ENCODE measurements at regions of chr4 and their contacts with region 1.

Region 1: DNA sequence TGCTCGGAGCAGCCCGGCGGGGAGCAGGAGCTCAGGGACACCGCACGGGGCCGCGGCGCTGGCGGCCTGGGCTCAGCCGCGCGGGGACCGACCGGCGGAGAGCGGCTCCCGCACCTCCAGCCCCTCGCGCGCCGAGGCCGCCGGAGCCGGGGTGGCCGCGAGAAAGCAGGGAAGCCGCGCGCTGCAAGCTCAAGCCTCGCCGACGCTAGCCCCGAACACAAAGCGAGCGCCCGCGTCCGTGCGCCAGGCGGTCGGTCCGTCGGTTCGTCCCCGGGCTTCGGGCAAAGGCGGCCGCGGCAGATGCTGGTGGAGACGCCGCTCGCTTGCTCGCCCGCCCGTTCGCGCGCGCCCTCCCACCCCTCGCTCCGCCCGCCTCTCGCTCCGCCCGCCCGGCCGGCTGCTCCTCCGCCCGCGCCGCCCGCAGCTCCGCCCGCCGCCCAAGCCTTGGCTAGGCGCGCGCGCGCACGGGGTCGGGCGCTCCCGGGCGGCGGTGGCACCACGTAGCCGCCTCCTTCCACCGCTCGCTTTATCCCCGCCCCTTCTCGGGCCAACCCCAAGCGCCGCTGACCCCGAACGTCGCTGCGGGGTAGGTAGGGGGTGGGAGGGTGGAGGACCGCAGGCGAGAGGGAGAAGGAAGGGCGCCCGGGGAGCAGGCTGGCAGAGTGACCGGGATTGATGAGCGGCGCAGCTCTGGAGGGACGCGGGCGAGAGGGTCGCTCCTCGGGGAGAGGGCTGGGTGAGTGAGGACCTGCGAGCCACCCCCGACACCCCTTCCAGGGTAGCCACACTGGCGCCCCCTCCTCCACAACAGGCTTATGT is at the start of gene TSPAN5:
- DNase-seq: peak; percentile 67
- ATAC-seq: peak; percentile 86
- H3K4me3 ChIP-seq: peak within 1 kb of the TSS; percentile 64
- H3K27ac ChIP-seq: peak within 1 kb of the TSS; percentile 94
- H3K4me1 ChIP-seq: peaks cover 23% of the 10 kb centered on the region
- H3K27me3 ChIP-seq: no peaks in the 10 kb centered on the region
- CTCF ChIP-seq: no peak; the same call in 1 of the 2 replicates
- POLR2A ChIP-seq: no peak; the same call in 1 of the 2 replicates
- RAD21 ChIP-seq: peak; percentile 13; the same call in 1 of the 2 replicates
- total RNA-seq, gene TSPAN5: 79.6 and 88.3 TPM in 2 replicates

Region 2: GRCh38 chr4:97627750-97628149 is 1030.7 kb before region 1 on chr4:
- CTCF ChIA-PET with region 1: no interaction called
- POLR2A ChIA-PET with region 1: no interaction called
- dilution Hi-C with region 1: no loop called
- in situ Hi-C with region 1: no loop called
- intact Hi-C with region 1: no loop called
- DNase-seq: no peak
- ATAC-seq: no peak
- H3K4me3 ChIP-seq: no peak overlapping the region
- H3K27ac ChIP-seq: no peak overlapping the region
- H3K4me1 ChIP-seq: no peaks in the 10 kb centered on the region
- H3K27me3 ChIP-seq: no peaks in the 10 kb centered on the region
- CTCF ChIP-seq: no peak
- POLR2A ChIP-seq: no peak
- RAD21 ChIP-seq: no peak

Region 3: DNA sequence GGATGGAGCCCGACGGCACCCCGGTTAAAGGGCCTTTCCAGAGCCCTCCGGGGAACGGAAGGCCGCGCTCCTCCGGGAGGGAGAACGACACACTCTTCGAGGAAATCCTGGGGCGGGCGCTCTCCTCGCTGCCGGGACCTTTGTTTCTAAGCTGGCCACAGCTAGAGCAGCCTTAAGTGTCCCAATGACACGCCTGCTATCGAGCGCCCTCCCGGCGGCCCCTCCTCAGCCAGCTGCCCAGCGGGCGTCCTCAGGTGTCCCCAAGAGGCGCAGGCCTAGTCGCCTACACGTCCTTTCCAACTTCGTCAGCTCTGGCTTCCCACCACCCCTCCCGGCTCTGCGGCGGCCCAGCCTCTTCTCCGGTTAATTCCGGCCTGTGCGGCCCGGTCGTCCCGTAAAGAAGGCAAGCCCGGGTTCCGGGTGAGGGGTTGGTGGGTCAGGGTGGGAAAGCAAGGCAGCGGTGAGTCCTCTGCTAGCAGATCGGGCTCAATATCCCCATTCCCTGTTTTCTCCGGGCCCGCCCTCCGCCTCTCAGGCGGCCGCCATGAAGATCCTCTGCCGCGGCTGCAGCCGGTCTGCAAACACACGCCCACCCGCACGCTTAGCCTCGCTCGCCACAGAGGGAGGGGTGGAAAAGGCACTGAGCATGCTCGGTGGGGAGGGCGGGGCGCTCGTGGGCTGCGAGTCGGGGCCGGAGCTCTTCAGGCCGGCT is 397.8 kb before region 1 on chr4:
- CTCF ChIA-PET with region 1: no interaction called
- POLR2A ChIA-PET with region 1: no interaction called
- dilution Hi-C with region 1: no loop called
- in situ Hi-C with region 1: loop called (anchors 25 kb)
- intact Hi-C with region 1: loop called (anchors 2 kb)
- DNase-seq: peak; percentile 96
- ATAC-seq: peak; percentile 95
- H3K4me3 ChIP-seq: peak overlapping the region; percentile 51
- H3K27ac ChIP-seq: peak overlapping the region; percentile 82
- H3K4me1 ChIP-seq: peaks cover 4% of the 10 kb centered on the region
- H3K27me3 ChIP-seq: no peaks in the 10 kb centered on the region
- CTCF ChIP-seq: no peak
- POLR2A ChIP-seq: peak; percentile 91
- RAD21 ChIP-seq: no peak

Region 4: GRCh38 chr4:98518559-98519267 is 139.8 kb before region 1 on chr4:
- CTCF ChIA-PET with region 1: no interaction called
- POLR2A ChIA-PET with region 1: no interaction called
- dilution Hi-C with region 1: no loop called
- in situ Hi-C with region 1: no loop called
- intact Hi-C with region 1: loop called (anchors 5 kb)
- DNase-seq: no peak
- ATAC-seq: no peak
- H3K4me3 ChIP-seq: no peak overlapping the region
- H3K27ac ChIP-seq: peak overlapping the region; percentile 68; the same call in 1 of the 2 replicates
- H3K4me1 ChIP-seq: peaks cover 46% of the 10 kb centered on the region
- H3K27me3 ChIP-seq: no peaks in the 10 kb centered on the region
- CTCF ChIP-seq: no peak
- POLR2A ChIP-seq: no peak
- RAD21 ChIP-seq: no peak

Region 5: GRCh38 chr4:98728433-98728832 is 69.9 kb after region 1 on chr4:
- CTCF ChIA-PET with region 1: no interaction called
- POLR2A ChIA-PET with region 1: no interaction called
- dilution Hi-C with region 1: no loop called
- in situ Hi-C with region 1: no loop called
- intact Hi-C with region 1: no loop called
- DNase-seq: peak; percentile 69
- ATAC-seq: peak; percentile 92
- H3K4me3 ChIP-seq: no peak overlapping the region
- H3K27ac ChIP-seq: no peak overlapping the region
- H3K4me1 ChIP-seq: peaks cover 2% of the 10 kb centered on the region; the same call in 1 of the 2 replicates
- H3K27me3 ChIP-seq: peaks cover 3% of the 10 kb centered on the region
- CTCF ChIP-seq: 0 out of 2 replicates have a peak, but pooled peaks have one; percentile 5
- POLR2A ChIP-seq: no peak
- RAD21 ChIP-seq: no peak

Region 6: GRCh38 chr4:98928505-98929340 is 270.2 kb after region 1 on chr4 and contains the start of gene EIF4E:
- CTCF ChIA-PET with region 1: no interaction called
- POLR2A ChIA-PET with region 1: no interaction called
- dilution Hi-C with region 1: no loop called
- in situ Hi-C with region 1: loop called (anchors 5 kb)
- intact Hi-C with region 1: loop called (anchors 2 kb)
- DNase-seq: peak; percentile 99
- ATAC-seq: peak; percentile 80
- H3K4me3 ChIP-seq: peak within 1 kb of the TSS; percentile 85
- H3K27ac ChIP-seq: peak within 1 kb of the TSS; percentile 94
- H3K4me1 ChIP-seq: peaks cover 3% of the 10 kb centered on the region; the same call in 1 of the 2 replicates
- H3K27me3 ChIP-seq: no peaks in the 10 kb centered on the region
- CTCF ChIP-seq: 0 out of 2 replicates have a peak, but pooled peaks have one; percentile 20
- POLR2A ChIP-seq: 0 out of 2 replicates have a peak, but pooled peaks have one; percentile 60
- RAD21 ChIP-seq: no peak
- total RNA-seq, gene EIF4E: 113 and 288 TPM in 2 replicates

Region 7: DNA sequence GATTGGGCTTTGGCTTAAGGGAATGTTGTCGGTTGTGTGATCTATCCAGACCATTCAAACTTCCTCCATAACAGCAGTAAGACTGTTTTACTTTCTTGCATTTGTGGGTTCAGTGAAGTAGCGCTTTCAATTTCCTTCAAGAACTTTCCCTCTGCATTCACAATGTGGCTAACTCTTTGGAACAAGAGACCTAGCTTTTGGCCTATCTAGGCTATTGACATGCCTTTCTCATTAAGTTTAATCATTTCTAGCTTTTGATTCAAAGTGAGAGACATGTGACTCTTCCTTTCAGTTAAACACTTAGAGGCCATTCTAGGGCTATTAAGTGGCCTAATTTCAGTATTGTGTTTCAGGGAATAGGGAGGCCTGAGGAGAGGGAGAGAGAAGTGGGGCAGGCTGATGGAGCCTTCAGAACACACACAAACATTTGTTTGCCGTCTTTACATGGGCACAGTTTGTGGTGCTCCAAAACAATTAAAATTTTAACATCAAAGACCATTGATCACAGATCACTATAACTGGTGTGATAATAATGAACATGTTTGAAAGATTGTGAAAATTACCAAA is 396.0 kb after region 1 on chr4:
- CTCF ChIA-PET with region 1: no interaction called
- POLR2A ChIA-PET with region 1: no interaction called
- dilution Hi-C with region 1: no loop called
- in situ Hi-C with region 1: loop called (anchors 10 kb)
- intact Hi-C with region 1: loop called (anchors 1 kb)
- DNase-seq: no peak
- ATAC-seq: no peak
- H3K4me3 ChIP-seq: no peak overlapping the region
- H3K27ac ChIP-seq: no peak overlapping the region
- H3K4me1 ChIP-seq: peaks cover 5% of the 10 kb centered on the region
- H3K27me3 ChIP-seq: no peaks in the 10 kb centered on the region
- CTCF ChIP-seq: no peak
- POLR2A ChIP-seq: no peak
- RAD21 ChIP-seq: no peak

Region 8: DNA sequence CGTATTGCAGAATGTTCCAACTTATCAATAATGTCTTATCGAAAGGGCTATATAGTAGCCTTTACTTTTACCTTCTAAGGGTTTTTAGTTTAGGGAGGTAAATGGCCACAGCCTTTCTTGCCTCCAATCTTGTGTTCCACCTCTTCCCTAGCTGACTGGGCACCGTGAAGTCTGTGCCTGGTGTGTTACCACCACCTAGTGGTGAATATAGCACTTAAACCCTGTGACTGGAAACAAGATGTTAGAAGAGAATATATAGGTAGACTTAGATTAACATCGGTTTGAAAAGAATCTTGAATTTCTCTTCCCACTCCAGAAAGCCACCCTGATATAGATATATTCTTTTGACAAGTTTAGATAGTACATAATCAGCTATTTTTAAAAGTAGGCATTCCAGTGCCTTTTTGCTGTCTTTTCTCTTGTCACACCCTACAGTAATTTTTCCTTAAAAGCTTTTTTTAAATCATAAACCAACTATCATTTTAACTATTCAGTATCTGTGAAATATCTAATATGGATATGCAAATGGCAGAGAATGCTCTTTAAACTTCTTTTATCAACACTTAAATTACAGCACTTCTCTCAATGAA is 804.5 kb after region 1 on chr4:
- CTCF ChIA-PET with region 1: interaction called, 3 read pairs
- POLR2A ChIA-PET with region 1: no interaction called
- dilution Hi-C with region 1: no loop called
- in situ Hi-C with region 1: no loop called
- intact Hi-C with region 1: loop called (anchors 5 kb)
- DNase-seq: peak; percentile 72
- ATAC-seq: peak; percentile 98
- H3K4me3 ChIP-seq: no peak overlapping the region
- H3K27ac ChIP-seq: no peak overlapping the region
- H3K4me1 ChIP-seq: no peaks in the 10 kb centered on the region
- H3K27me3 ChIP-seq: 0 out of 2 replicates have a peak, but pooled peaks cover 1% of the 10 kb centered on the region
- CTCF ChIP-seq: peak; percentile 92
- POLR2A ChIP-seq: no peak
- RAD21 ChIP-seq: peak; percentile 98